ENCODE measurements at regions of chr14 and their contacts with region 1.

Region 1: GRCh38 chr14:75522224-75522982 is at the start of gene BATF:
- DNase-seq: peak; percentile 47 to 83 (median 76)
- ATAC-seq: peak; percentile 89
- H3K4me3 ChIP-seq: peak within 1 kb of the TSS; percentile 84
- H3K4me3 Mint-ChIP-seq: peak within 1 kb of the TSS; percentile 92 to 100 (median 98)
- H3K27ac ChIP-seq: peak within 1 kb of the TSS; percentile 82
- H3K27ac Mint-ChIP-seq: peak within 1 kb of the TSS; percentile 91 to 99 (median 95)
- H3K4me1 ChIP-seq: peaks cover 44 to 49% of the 10 kb centered on the region in 2 donors
- H3K4me1 Mint-ChIP-seq: peaks cover 51 to 80% (median 75%) of the 10 kb centered on the region in 7 donors
- H3K27me3 ChIP-seq: no peaks in the 10 kb centered on the region
- H3K27me3 Mint-ChIP-seq: no peaks in the 10 kb centered on the region
- total RNA-seq, gene BATF: 6.8 to 70.0 (median 10.6) TPM

Region 2: GRCh38 chr14:75487155-75487671 is 35.2 kb before region 1 on chr14:
- CTCF ChIA-PET with region 1: no interaction called
- POLR2A ChIA-PET with region 1: no interaction called
- intact Hi-C with region 1: loop called in 1 of 2 experiments (anchors 2 kb)
- DNase-seq: no peak
- ATAC-seq: peak; percentile 20
- H3K4me3 ChIP-seq: no peak overlapping the region
- H3K4me3 Mint-ChIP-seq: peak overlapping the region in 1 of 10 donors; percentile 65
- H3K27ac ChIP-seq: no peak overlapping the region
- H3K27ac Mint-ChIP-seq: peak overlapping the region in 2 of 9 donors; percentile 38 to 47
- H3K4me1 ChIP-seq: peaks cover 0 to 9% of the 10 kb centered on the region in 2 donors
- H3K4me1 Mint-ChIP-seq: peaks cover 4 to 31% (median 8%) of the 10 kb centered on the region in 7 donors
- H3K27me3 ChIP-seq: no peaks in the 10 kb centered on the region
- H3K27me3 Mint-ChIP-seq: peaks cover 0 to 2% (median 0%) of the 10 kb centered on the region in 5 donors

Region 3: DNA sequence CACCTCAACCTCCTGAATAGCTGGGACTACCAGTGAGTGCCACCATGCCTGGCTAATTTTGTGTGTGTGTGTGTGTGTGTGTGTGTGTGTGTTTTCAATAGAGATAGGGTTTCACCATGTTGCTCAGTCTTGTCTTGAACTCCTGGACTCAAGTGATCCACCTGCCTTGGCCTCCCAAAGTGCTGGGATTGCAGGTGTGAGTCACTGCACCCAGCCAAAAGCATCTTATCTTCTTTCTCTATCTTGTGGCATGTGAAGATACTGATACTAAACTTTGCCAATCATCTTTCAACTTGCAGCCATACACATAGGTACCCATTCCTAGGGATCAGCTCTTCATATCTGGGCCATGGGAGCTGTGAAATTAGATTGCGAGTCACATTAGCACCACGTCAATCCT is 33.4 kb after region 1 on chr14:
- CTCF ChIA-PET with region 1: interaction called, 21 read pairs
- POLR2A ChIA-PET with region 1: interaction called, 4 read pairs
- intact Hi-C with region 1: loop called in 1 of 2 experiments (anchors 1 kb)
- DNase-seq: no peak
- ATAC-seq: no peak
- H3K4me3 ChIP-seq: no peak overlapping the region
- H3K4me3 Mint-ChIP-seq: no peak overlapping the region
- H3K27ac ChIP-seq: no peak overlapping the region
- H3K27ac Mint-ChIP-seq: no peak overlapping the region
- H3K4me1 ChIP-seq: peaks cover 1 to 13% of the 10 kb centered on the region in 2 donors
- H3K4me1 Mint-ChIP-seq: peaks cover 6 to 62% (median 10%) of the 10 kb centered on the region in 7 donors
- H3K27me3 ChIP-seq: no peaks in the 10 kb centered on the region
- H3K27me3 Mint-ChIP-seq: no peaks in the 10 kb centered on the region

Region 4: GRCh38 chr14:75566321-75566720 is 43.9 kb after region 1 on chr14:
- CTCF ChIA-PET with region 1: interaction called, 21 read pairs
- POLR2A ChIA-PET with region 1: interaction called, 4 read pairs
- intact Hi-C with region 1: loop called (anchors 1 kb)
- DNase-seq: peak in 7 of 9 donors; percentile 41 to 78 (median 63)
- ATAC-seq: peak; percentile 91
- H3K4me3 ChIP-seq: no peak overlapping the region
- H3K4me3 Mint-ChIP-seq: peak overlapping the region in 7 of 10 donors; percentile 7 to 61 (median 45)
- H3K27ac ChIP-seq: peak overlapping the region; percentile 22
- H3K27ac Mint-ChIP-seq: peak overlapping the region; percentile 69 to 96 (median 87)
- H3K4me1 ChIP-seq: peaks cover 3 to 6% of the 10 kb centered on the region in 2 donors
- H3K4me1 Mint-ChIP-seq: peaks cover 13 to 53% (median 34%) of the 10 kb centered on the region in 7 donors
- H3K27me3 ChIP-seq: no peaks in the 10 kb centered on the region
- H3K27me3 Mint-ChIP-seq: no peaks in the 10 kb centered on the region

Region 5: GRCh38 chr14:75654127-75654732 is 131.8 kb after region 1 on chr14:
- CTCF ChIA-PET with region 1: interaction called, 5 read pairs
- POLR2A ChIA-PET with region 1: interaction called, 5 read pairs
- intact Hi-C with region 1: loop called in 1 of 2 experiments (anchors 2 kb)
- DNase-seq: peak; percentile 60 to 83 (median 71)
- ATAC-seq: peak; percentile 97
- H3K4me3 ChIP-seq: no peak overlapping the region
- H3K4me3 Mint-ChIP-seq: no peak overlapping the region
- H3K27ac ChIP-seq: peak overlapping the region; percentile 14
- H3K27ac Mint-ChIP-seq: peak overlapping the region in 1 of 9 donors; percentile 20
- H3K4me1 ChIP-seq: no peaks in the 10 kb centered on the region
- H3K4me1 Mint-ChIP-seq: peaks cover 5 to 17% (median 10%) of the 10 kb centered on the region in 7 donors
- H3K27me3 ChIP-seq: no peaks in the 10 kb centered on the region
- H3K27me3 Mint-ChIP-seq: no peaks in the 10 kb centered on the region